ENCODE measurements at regions of chr5 and their contacts with region 1.

Region 1: DNA sequence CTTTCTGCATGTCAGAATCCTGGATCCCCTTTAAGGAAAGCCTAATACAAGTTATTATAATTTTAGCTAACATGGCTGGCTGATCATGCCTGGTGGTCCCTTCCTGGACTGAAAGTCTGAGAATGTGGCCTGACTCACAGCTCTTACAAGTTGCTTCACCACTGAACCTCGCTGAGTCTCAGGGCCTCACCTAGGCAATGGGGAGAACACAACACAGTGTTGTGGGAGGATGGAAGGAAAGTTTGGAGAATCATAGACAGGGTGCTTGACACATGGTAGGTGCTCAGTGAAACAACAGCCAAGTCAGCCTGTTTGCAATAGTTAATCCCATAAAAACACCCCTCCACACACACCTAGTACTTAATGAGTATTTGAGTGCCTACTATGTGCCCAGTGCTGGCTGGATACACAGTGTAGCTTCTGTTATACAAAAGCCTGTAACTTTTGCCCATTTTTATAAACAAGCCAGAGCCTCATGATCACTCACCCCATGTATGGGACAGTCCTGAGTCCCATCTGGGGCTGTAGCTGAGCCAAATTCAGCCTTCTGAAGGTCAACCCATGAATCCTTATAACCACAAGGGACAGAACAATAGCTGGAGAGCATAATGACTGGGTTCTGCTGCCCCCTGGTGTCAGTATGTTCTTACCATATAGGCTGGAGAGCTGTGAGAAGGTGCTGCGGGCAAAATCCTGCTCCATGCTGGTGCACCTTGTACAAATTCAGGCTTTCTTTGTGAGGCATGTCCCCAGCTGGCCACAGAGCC is 3.9 kb downstream of the ACSL6 start:
- DNase-seq: peak; percentile 83
- CTCF ChIP-seq: peak; percentile 70

Region 2: DNA sequence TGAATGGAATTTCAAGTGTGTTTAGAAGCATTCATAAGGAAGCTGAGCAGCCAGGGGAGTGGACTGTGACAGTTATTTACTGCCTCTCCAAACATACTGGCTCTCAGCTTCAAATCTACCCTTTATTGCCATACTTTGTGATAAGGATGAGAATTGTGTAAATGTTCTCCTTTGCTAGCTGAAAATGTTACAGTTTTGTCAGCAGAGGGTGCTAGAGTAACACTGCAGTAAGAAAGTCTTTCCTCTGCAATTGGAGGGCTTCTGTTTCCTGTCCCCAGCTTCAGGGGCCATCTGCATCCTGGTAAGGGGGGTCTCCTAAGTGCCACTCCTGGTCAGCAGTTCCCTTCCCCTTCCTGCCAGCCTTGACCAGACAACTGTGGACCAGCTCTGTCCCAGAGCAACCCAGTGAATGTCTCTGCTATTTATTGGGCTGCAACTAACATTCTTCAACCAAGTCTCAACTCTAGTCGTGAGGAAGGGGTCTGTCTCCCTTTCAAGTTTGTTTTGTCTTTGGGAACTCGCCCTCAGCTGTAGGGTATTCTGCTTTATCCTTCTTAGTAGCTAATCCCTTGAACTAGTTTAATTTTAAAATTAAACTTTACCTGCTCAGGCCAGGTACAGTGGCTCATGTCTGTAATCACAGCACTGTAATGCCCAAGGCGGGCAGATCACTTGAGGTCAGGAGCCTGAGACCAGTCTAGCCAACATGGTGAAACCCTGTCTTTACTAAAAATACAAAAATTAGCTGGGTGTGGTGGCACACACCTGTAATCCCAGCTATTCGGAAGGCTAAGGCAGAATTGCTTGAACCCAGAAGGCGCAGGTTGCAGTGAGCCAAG is 417.9 kb before region 1 on chr5:
- in situ Hi-C with region 1: loop called (anchors 10 kb)
- DNase-seq: peak; percentile 67
- CTCF ChIP-seq: peak; percentile 82

Region 3: DNA sequence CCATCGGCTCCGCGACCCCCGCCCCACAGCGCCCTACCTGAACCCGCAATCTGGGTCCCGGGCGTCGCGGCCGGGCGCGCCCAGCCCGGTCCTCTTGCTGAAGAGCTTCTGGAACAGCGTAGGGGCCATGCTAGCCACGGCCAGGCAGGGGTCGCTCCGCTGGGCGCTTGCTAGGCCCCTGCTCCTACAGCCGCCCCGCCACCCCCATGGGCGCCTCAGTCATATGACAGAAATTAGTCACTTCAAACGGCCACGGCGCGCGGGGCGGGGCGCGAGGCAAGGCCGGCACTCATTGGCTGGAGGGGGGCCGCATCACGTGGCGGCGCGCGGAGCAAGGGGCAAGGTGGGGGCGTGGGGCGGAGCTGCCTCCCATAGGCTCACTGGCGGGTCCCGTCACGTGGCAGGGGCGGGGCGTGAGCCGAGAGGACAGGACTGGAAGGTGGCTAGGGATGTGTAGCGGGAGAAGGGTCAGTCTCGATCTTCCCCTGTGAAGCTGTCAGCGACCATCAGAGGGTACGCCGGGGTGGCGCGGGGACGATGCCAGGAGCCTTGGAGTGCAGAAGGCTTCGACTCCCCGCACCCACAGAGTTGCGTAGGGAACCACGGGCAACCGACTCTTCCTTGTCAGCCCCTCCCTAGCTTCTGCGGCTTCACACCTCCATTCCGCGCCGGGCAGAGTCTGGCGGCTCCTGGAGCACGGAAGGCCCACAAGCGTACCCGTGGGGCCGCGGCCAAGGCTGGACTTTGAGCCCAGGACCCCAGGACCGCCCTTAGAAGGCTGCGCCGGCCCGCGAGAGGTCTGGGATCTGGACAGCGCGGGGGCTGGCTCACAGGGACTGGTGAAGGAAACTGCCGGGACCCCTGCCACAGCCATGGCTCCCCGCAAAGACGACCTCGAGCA is 210.5 kb before region 1 on chr5 and contains the start of gene FNIP1:
- in situ Hi-C with region 1: loop called (anchors 10 kb)
- DNase-seq: peak; percentile 99
- CTCF ChIP-seq: peak; percentile 14

Region 4: DNA sequence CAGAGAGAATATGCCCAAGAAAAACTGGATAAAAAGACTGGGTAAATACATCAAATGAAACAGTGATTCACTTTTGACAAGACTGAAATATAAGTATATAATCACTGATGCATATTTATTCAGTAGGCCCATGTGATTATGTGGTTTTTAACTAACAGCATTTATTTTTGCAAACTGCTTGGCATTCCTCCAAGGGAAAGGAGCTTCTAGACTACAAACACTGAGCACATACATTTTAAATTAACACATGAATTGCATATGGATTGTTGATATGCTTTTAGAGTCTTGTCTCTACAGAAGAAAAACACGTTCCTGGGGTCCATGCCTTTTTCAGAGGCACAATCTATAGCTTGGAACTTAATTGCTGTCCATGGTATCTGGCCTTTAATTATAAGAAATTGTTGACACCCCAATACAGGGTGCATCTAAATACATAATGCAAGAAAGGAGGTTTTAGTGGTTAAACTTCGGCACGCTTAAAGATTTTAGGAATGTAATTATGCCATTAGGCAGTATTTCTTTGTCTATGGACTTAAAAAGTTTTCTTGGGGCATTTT is 55.2 kb before region 1 on chr5:
- in situ Hi-C with region 1: no loop called
- DNase-seq: no peak
- CTCF ChIP-seq: no peak

Measured in GM13977 (cell line).